Heart right ventricle (tissue), 16 donors: ENCODE measurements at regions of chr15 and their contacts with region 1.

Region 1: GRCh38 chr15:57591646-57592367 is at the start of gene MYZAP:
- DNase-seq: peak; percentile 61 to 74
- ATAC-seq: peak; percentile 39 to 80 (median 62)
- H3K4me3 ChIP-seq: peak within 1 kb of the TSS; percentile 42 to 86 (median 78)
- H3K27ac ChIP-seq: peak within 1 kb of the TSS; percentile 75 to 95 (median 91)
- H3K4me1 ChIP-seq: peaks cover 3 to 69% (median 34%) of the 10 kb centered on the region in 9 donors
- H3K27me3 ChIP-seq: peaks cover 0 to 19% (median 0%) of the 10 kb centered on the region in 7 donors
- CTCF ChIP-seq: peak in 1 of 9 donors; percentile 26
- total RNA-seq, gene MYZAP: 505 to 1,280 (median 954) TPM

Region 2: GRCh38 chr15:57503066-57503702 is 88.6 kb before region 1 on chr15:
- intact Hi-C with region 1: no loop called
- DNase-seq: no peak
- ATAC-seq: no peak
- H3K4me3 ChIP-seq: no peak overlapping the region
- H3K27ac ChIP-seq: peak overlapping the region in 5 of 10 donors; percentile 22 to 72 (median 46)
- H3K4me1 ChIP-seq: peaks cover 4 to 76% (median 40%) of the 10 kb centered on the region in 9 donors
- H3K27me3 ChIP-seq: no peaks in the 10 kb centered on the region
- CTCF ChIP-seq: peak in 4 of 9 donors; percentile 6 to 15 (median 10)

Region 3: GRCh38 chr15:57566834-57567233 is 25.0 kb before region 1 on chr15:
- intact Hi-C with region 1: loop called in 5 of 10 experiments (anchors 1 to 5 kb)
- DNase-seq: peak in 1 of 2 donors; percentile 70
- ATAC-seq: peak in 7 of 8 donors; percentile 32 to 79 (median 67)
- H3K4me3 ChIP-seq: no peak overlapping the region
- H3K27ac ChIP-seq: peak overlapping the region in 8 of 10 donors; percentile 4 to 76 (median 61)
- H3K4me1 ChIP-seq: peaks cover 0 to 35% (median 16%) of the 10 kb centered on the region in 9 donors
- H3K27me3 ChIP-seq: peaks cover 0 to 4% (median 0%) of the 10 kb centered on the region in 7 donors
- CTCF ChIP-seq: no peak

Region 4: GRCh38 chr15:57635300-57635909 is 43.6 kb after region 1 on chr15:
- intact Hi-C with region 1: loop called in 3 of 10 experiments (anchors 2 to 5 kb)
- DNase-seq: peak in 1 of 2 donors; percentile 64
- ATAC-seq: peak; percentile 40 to 91 (median 80)
- H3K4me3 ChIP-seq: no peak overlapping the region
- H3K27ac ChIP-seq: peak overlapping the region; percentile 45 to 87 (median 78)
- H3K4me1 ChIP-seq: peaks cover 4 to 77% (median 55%) of the 10 kb centered on the region in 9 donors
- H3K27me3 ChIP-seq: no peaks in the 10 kb centered on the region
- CTCF ChIP-seq: peak in 5 of 9 donors; percentile 2 to 42 (median 41)

Region 5: DNA sequence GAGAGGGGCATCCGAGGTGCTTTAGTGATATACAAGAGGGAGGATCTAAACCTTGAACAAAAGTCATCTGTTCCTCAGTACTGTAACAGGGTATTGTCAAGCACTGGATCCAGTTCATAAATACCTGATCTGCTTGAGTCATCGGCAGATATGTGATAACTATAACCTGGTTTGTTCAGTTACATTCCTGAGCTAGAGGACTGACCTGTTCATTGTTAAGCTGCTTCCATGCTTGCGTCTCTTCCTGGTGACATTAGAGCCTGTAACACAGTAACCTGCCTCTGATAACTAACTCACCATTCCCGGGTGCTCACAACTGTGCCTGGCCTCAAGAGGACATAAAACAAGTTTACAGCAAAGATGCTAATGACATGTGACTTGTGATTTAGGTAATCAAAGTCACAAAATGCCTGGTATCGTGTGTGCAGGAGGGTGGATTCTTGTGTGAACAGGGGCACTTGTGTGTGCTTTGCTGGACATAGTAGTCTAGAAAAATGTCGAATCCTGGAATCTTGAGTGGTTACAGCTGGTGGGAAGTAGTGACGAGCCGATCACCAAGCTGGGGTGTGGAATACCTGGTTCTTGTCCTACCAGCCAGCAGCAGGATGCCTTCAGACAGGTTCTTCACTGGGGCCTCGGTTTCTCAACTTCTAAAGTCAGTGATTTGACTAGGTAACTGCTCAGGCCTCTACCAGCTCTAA is 83.8 kb after region 1 on chr15:
- intact Hi-C with region 1: no loop called
- DNase-seq: no peak
- ATAC-seq: peak in 2 of 8 donors; percentile 9 to 11
- H3K4me3 ChIP-seq: no peak overlapping the region
- H3K27ac ChIP-seq: peak overlapping the region in 3 of 10 donors; percentile 5 to 29 (median 19)
- H3K4me1 ChIP-seq: peaks cover 0 to 51% (median 32%) of the 10 kb centered on the region in 9 donors
- H3K27me3 ChIP-seq: no peaks in the 10 kb centered on the region
- CTCF ChIP-seq: no peak

Region 6: DNA sequence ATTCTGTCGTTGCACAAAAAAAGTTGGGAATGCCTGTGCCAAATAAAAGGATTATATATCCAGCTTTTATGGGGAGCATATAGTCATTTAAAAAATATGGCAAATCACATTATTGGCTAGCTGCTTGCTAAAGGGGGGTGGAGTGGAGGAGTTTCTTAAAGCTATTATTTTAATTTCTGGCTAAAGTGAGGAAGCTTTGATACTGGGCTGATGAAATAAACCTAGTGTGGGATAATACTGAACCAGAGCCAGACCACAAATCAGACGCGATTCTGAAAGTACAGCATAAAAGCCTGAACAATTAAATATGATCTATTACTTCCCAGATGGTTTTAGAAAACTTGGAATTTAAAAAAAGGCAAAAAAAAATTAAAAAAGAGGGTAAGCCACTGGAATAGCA is 129.1 kb after region 1 on chr15:
- intact Hi-C with region 1: no loop called
- DNase-seq: no peak
- ATAC-seq: no peak
- H3K4me3 ChIP-seq: no peak overlapping the region
- H3K27ac ChIP-seq: no peak overlapping the region
- H3K4me1 ChIP-seq: peaks cover 0 to 5% (median 0%) of the 10 kb centered on the region in 9 donors
- H3K27me3 ChIP-seq: no peaks in the 10 kb centered on the region
- CTCF ChIP-seq: no peak